A673 (cell line): ENCODE measurements at regions of chr15 and their contacts with region 1.

Region 1: DNA sequence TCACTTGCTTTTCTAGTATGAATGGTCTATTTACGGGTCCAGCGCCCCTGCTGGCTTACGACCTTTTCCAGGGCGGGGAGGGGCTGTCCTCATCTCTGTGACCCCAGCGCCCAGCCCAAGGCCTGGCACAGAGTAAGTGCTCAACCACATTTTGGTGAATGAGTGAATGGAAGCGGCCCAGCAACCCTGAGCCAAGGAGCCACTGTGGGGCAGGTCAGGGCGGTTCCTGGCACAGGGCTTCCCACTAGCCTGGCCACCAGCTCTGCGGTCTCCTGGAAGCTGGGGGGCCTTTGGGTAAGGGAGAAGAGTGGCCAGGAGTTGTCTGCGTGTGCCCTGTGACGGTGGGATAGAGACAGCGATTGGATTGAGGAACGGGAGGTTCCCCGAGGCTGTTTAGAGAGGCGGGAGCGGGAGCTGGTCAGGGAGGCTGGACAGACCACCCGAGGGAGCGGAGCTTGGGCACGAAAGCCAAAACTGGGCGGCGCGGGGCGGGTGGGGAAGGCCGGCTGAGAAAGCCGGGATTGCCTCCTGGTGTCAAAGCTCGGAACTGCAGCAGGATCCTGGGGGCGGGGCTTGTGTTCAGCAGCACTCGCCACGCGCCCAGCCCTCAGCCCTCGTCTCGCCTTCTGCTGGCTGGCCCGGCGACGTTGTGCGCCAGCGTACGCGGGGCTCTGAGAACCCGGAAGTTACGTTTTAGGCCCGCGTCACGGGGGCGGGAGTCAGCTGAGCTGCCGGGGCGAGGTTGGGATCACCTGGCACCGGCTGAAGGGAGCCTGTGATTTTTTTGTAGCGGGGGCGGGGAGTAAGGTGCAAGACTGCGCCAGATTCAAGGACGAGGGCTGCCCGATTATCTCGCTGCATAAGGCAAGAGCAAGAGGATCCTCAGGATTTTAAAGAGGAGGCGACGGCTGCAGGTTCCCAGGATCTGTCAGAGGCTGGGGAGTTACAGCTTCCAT is at the start of gene VPS18:
- DNase-seq: peak; percentile 98
- H3K4me3 ChIP-seq: peak within 1 kb of the TSS; percentile 95
- H3K27ac ChIP-seq: peak within 1 kb of the TSS; percentile 79
- H3K4me1 ChIP-seq: peaks cover 6% of the 10 kb centered on the region
- H3K27me3 ChIP-seq: no peaks in the 10 kb centered on the region
- CTCF ChIP-seq: peak; percentile 87
- total RNA-seq, gene VPS18: 21.9 and 23.8 TPM in 2 replicates

Region 2: DNA sequence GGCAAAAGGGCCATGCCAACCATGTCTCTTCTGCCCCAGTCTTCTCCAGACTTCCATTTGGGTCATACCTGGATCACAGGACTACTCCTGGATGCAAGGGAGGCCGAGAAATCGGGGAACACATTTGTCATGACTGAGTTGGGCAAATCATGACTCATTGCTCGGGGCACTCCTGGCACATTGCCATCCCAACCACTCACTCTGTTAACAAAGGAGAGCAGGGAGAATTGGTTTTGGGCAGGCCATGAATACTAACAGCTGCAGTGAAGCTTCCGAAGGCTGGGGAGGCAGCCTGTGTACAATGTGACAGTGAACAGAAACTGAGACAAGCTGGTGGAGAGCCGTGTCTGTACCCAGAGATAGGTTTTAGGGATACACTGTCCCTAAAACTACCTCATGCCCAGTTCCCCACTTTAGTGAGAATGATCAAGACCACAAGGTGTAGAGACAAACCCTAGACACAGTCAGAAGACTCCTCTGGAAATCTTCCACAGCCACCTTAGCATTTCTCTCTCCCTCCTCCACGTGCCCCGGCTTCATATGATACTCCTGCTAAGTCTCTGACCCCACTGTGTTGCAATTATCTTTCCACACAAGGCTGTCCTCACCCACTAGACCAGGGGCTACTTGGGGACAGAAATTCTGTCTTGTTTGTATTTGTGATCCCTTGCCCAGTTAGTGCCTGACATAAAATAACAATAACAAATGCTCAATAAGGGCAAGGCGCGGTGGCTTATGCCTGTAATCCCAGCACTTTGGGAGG is 743.7 kb before region 1 on chr15:
- CTCF ChIA-PET with region 1: no interaction called
- POLR2A ChIA-PET with region 1: no interaction called
- intact Hi-C with region 1: no loop called
- DNase-seq: peak; percentile 71
- H3K4me3 ChIP-seq: no peak overlapping the region
- H3K27ac ChIP-seq: no peak overlapping the region
- H3K4me1 ChIP-seq: no peaks in the 10 kb centered on the region
- H3K27me3 ChIP-seq: no peaks in the 10 kb centered on the region
- CTCF ChIP-seq: no peak

Region 3: GRCh38 chr15:40660686-40661085 is 233.3 kb before region 1 on chr15:
- CTCF ChIA-PET with region 1: no interaction called
- POLR2A ChIA-PET with region 1: no interaction called
- intact Hi-C with region 1: no loop called
- DNase-seq: no peak
- H3K4me3 ChIP-seq: no peak overlapping the region
- H3K27ac ChIP-seq: no peak overlapping the region
- H3K4me1 ChIP-seq: no peaks in the 10 kb centered on the region
- H3K27me3 ChIP-seq: no peaks in the 10 kb centered on the region
- CTCF ChIP-seq: no peak

Region 4: GRCh38 chr15:40684381-40684780 is 209.6 kb before region 1 on chr15:
- CTCF ChIA-PET with region 1: interaction called, 4 read pairs
- POLR2A ChIA-PET with region 1: no interaction called
- intact Hi-C with region 1: loop called (anchors 2 kb)
- DNase-seq: no peak
- H3K4me3 ChIP-seq: no peak overlapping the region
- H3K27ac ChIP-seq: no peak overlapping the region
- H3K4me1 ChIP-seq: no peaks in the 10 kb centered on the region
- H3K27me3 ChIP-seq: no peaks in the 10 kb centered on the region
- CTCF ChIP-seq: no peak

Region 5: DNA sequence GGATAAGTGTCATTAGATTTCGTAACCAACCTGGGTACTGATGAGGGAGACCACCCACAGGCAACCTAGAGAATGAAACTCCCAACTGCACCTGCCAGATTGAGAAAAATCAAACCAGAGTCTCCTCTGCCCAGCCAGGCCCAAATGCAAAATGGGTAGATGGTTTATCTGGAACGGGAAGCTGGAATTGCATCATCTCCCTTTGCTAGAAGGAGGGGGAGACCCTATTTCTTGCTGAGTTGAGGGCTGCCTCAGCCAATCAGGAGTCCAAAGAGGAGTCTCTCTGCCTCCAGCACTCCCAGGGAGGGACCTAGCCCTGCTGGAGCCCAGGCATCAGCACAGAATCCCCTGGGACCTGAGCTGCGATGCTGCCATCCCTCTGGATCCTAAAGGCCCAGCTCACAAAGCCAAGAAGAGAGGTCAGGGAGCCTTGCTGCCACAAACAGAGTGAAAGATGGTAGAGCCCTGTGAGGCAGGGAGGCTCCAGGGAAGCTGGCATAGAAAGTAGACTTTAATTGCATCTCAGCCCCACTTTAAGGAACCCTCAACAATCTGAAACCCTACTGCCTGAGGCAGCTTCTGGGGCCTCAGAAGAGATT is 147.0 kb before region 1 on chr15:
- CTCF ChIA-PET with region 1: interaction called, 6 read pairs
- POLR2A ChIA-PET with region 1: no interaction called
- intact Hi-C with region 1: loop called (anchors 2 kb)
- DNase-seq: peak; percentile 87
- H3K4me3 ChIP-seq: no peak overlapping the region
- H3K27ac ChIP-seq: peak overlapping the region; percentile 73
- H3K4me1 ChIP-seq: peaks cover 19% of the 10 kb centered on the region
- H3K27me3 ChIP-seq: no peaks in the 10 kb centered on the region
- CTCF ChIP-seq: no peak